Astrocyte of the cerebellum (primary cell): ENCODE measurements at regions of chr5 and their contacts with region 1.

Region 1: DNA sequence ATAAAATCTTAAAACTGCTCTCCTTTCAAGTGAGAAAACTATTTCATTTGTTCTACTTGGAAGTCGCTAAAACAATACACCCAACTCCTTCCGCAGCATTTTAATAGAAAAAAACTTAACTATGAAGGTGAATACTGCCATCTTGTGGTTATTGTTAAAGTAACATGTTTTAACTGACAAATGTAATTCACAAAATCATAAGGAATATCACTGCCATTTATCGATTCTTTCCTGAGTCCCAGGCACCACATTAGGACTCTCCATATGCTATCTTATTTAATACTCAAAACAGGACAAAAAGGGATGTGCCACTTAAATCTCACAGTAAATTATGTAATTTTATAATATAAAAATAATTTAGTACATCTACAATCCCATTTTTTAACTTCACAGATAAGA is 130.5 kb upstream of the ITGA1 start:
- DNase-seq: peak; percentile 48
- H3K4me3 ChIP-seq: no peak overlapping the region
- CTCF ChIP-seq: peak; percentile 7

Region 2: GRCh38 chr5:50969151-50970031 is 1687.9 kb before region 1 on chr5:
- in situ Hi-C with region 1: loop called (anchors 10 kb)
- DNase-seq: no peak
- H3K4me3 ChIP-seq: no peak overlapping the region
- CTCF ChIP-seq: no peak

Region 3: DNA sequence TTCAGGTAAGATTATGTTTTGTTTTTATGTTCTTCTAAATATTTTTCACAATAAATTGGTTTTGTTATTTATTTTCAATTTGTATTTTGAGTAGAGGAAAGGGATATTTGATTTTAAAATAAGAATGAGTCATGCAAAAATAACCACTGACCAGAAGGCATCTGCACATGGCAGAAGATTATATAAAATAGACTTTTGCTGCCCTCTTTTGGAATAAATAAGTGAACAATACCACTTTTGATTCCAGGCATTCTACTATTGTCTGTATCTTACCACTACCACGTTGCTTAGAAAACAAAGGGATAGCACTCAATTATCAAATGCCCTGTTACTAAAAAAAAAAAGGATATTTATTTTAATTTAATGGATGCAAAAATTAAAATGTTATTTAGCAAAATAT is 96.9 kb before region 1 on chr5:
- in situ Hi-C with region 1: no loop called
- DNase-seq: no peak
- H3K4me3 ChIP-seq: no peak overlapping the region
- CTCF ChIP-seq: no peak

Region 4: DNA sequence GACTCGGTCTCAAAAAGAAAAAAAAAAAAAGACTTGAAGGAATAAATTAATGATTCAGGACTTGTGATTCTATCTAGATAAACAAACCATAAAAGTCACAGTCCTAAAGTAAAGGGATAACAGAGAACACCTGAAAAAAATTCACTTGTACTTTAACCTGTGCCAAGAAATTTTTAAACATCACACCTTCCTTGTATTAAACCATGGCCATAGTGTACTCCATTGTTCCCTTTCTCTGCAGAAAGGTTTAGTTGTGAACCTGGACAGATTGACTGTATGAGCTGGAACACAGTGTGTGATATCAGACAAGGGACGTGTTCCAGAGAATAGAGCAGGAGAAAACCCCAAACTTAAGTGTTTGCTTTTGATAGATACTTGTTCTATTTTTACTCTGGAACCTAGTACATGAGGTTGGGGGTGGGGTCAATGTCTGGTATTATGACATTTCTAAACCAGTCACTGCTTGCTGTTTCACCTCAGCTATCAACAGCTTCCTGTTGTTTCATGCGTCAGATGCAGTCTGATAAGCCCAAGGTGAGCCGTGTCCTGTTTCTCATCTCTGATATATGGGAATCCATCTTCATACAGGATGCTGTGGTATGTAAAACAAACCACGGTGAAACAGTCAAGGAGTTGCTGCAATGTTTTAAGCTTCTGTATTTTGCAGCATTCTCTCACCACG is 68.0 kb after region 1 on chr5:
- in situ Hi-C with region 1: loop called (anchors 5 kb)
- DNase-seq: no peak
- H3K4me3 ChIP-seq: no peak overlapping the region
- CTCF ChIP-seq: no peak

Region 5: DNA sequence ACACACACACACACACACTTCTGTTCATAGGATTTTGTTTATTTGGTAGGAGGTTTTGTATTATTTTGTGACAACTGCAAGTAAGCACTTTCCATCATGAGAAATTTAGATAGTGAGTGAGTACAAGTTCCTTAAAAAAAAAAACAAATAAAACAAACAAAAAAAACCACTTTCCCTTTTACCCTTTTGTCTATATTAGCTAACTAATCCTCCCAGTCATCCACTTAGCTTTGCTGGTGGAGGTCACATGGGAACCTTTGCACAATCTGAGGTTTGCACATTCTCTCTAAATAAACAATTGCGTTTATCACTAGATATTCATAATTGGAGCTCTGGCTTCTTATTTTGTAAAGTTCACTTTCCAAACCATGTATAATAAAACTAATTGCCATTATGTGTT is 137.3 kb after region 1 on chr5:
- in situ Hi-C with region 1: no loop called
- DNase-seq: no peak
- H3K4me3 ChIP-seq: no peak overlapping the region
- CTCF ChIP-seq: no peak